ENCODE measurements at regions of chr9 and their contacts with region 1.

Region 1: GRCh38 chr9:122810306-122810946 is 10.5 kb downstream of the OR1K1 start:
- DNase-seq: peak; percentile 29 to 81
- H3K4me3 ChIP-seq: no peak overlapping the region
- H3K27ac ChIP-seq: no peak overlapping the region
- H3K4me1 ChIP-seq: peaks cover 0 to 3% (median 2%) of the 10 kb centered on the region in 4 experiments; a peak in 4 of 7 replicates
- H3K27me3 ChIP-seq: no peaks in the 10 kb centered on the region
- CTCF ChIP-seq: peak; percentile 49 to 87 (median 84)
- EP300 ChIP-seq: no peak
- POLR2A ChIP-seq: no peak
- RAD21 ChIP-seq: peak; percentile 97

Region 2: GRCh38 chr9:122379340-122379739 is 431.1 kb before region 1 on chr9:
- CTCF ChIA-PET with region 1: interaction called, 13 read pairs
- POLR2A ChIA-PET with region 1: no interaction called
- DNase-seq: no peak
- H3K4me3 ChIP-seq: no peak overlapping the region
- H3K27ac ChIP-seq: no peak overlapping the region
- H3K4me1 ChIP-seq: peaks cover 12 to 21% (median 16%) of the 10 kb centered on the region in 4 experiments
- H3K27me3 ChIP-seq: peaks cover 0 to 5% (median 0%) of the 10 kb centered on the region in 4 experiments; a peak in 3 of 7 replicates
- CTCF ChIP-seq: peak; percentile 68 to 91 (median 68)
- EP300 ChIP-seq: no peak
- POLR2A ChIP-seq: no peak
- RAD21 ChIP-seq: peak; percentile 72 to 76

Region 3: DNA sequence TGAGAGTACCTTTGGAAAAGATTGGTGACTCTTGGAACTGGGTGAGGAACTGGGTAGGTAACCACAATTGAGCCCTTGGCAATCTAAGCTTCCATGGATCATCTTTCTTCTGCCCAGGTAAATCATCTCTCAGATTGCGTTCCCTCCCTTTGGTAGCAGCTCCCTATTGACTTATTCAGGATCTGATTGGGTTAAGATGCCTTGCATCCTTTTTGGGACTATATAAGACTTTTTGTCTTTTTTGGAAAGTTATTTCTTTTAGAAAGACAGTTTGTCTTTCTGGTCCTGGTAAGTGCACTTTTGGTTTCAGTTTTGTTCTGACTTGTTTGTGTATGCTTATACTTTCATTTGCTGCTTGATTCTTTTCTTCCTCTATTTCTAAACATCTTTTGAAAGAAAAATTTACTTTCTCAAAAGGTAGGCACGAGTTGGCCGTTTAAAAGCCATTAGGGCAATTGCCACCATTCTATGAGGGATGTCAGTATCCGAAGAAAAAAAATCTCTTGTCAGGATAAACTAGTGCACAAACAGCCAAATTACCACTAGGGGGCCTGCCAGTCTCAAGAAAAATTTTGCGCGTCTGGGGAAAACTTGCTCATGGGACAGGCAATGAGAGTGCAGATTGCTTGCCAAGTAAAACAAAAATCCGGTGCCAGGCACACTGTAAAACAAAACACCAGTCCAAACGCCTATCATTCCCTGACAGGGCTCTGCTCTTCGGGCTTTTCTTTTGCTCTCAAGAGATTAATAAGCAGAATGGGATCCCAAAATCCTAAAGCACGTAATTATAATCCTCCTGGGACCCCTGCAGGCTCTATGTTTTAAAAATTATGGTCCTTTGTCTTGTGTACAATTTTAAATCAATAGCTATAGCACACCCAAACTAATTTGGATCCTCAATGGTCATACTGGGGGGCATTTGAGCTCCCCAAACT is 345.5 kb before region 1 on chr9:
- CTCF ChIA-PET with region 1: interaction called, 61 read pairs
- POLR2A ChIA-PET with region 1: interaction called, 3 read pairs
- DNase-seq: peak; percentile 31 to 54
- H3K4me3 ChIP-seq: no peak overlapping the region
- H3K27ac ChIP-seq: no peak overlapping the region
- H3K4me1 ChIP-seq: no peaks in the 10 kb centered on the region; a peak in 1 of 7 replicates
- H3K27me3 ChIP-seq: no peaks in the 10 kb centered on the region; a peak in 1 of 7 replicates
- CTCF ChIP-seq: peak; percentile 28 to 74 (median 71)
- EP300 ChIP-seq: no peak
- POLR2A ChIP-seq: no peak
- RAD21 ChIP-seq: peak; percentile 80 to 85

Region 4: DNA sequence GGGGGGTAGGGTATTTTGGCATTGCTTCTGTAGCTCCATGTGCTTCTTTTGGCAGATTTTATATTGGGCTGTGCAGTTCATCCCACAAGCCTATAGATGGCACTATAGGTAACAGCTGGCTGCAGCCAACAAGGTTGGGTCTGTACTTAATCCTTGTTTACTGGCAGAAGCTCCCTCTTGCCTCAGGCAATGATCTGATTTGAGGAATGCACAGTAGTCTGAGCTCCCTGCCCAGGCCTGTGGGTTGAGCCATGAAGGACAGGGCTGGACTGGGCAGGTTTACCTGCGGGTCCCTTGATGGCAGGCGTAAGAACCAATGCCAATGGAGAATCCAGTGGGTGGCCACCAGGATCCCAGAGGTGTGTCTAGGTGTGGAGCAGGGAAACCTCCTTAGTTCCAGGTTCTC is 311.5 kb before region 1 on chr9:
- CTCF ChIA-PET with region 1: interaction called, 10 read pairs
- POLR2A ChIA-PET with region 1: no interaction called
- DNase-seq: peak; percentile 25 to 41
- H3K4me3 ChIP-seq: no peak overlapping the region
- H3K27ac ChIP-seq: no peak overlapping the region
- H3K4me1 ChIP-seq: no peaks in the 10 kb centered on the region
- H3K27me3 ChIP-seq: no peaks in the 10 kb centered on the region
- CTCF ChIP-seq: peak in 2 of 3 experiments; percentile 53 to 75; a peak in 3 of 4 replicates
- EP300 ChIP-seq: no peak
- POLR2A ChIP-seq: no peak
- RAD21 ChIP-seq: peak; percentile 54 to 65